ENCODE measurements at regions of chr1 and their contacts with region 1.

Region 1: GRCh38 chr1:34701326-34702060 is 53.4 kb upstream of the GJB5 start:
- DNase-seq: no peak
- ATAC-seq: no peak
- H3K4me3 ChIP-seq: no peak overlapping the region
- H3K27ac ChIP-seq: no peak overlapping the region
- H3K4me1 ChIP-seq: no peaks in the 10 kb centered on the region
- H3K27me3 ChIP-seq: no peaks in the 10 kb centered on the region

Region 2: DNA sequence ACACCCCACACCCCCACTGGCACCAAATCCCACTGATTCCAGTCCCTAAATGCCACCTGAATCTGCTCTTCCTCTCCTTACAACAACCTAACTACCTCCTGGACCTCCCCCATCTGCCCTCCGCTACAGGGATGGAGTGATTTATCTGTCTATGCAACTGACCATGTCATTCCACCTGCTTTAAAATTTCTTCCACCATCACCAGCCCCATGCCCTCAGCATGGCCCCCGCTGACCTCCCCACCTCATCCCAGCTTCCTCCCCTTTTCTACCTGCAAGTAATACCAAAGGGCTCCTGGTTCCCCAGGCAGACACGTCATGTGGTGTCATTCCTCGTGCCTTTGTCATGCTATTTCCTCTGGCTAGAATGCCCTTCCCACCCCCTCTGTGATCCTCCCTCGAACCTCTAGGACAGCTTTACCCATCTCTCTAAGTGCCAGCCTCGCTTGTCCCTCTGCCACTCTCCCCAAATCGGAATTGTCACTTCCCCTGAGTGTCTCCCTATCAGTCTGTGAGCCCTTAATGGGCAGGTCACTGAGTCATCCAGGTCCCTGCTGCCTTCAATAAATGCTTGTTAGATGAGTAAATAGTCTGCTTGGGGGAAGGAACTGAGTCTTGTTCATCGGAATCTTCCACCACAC is 61.8 kb after region 1 on chr1:
- intact Hi-C with region 1: loop called in 1 of 2 experiments (anchors 2 kb)
- DNase-seq: no peak
- ATAC-seq: no peak
- H3K4me3 ChIP-seq: no peak overlapping the region
- H3K27ac ChIP-seq: no peak overlapping the region
- H3K4me1 ChIP-seq: no peaks in the 10 kb centered on the region
- H3K27me3 ChIP-seq: no peaks in the 10 kb centered on the region